ENCODE measurements at regions of chr12 and their contacts with region 1.

Region 1: DNA sequence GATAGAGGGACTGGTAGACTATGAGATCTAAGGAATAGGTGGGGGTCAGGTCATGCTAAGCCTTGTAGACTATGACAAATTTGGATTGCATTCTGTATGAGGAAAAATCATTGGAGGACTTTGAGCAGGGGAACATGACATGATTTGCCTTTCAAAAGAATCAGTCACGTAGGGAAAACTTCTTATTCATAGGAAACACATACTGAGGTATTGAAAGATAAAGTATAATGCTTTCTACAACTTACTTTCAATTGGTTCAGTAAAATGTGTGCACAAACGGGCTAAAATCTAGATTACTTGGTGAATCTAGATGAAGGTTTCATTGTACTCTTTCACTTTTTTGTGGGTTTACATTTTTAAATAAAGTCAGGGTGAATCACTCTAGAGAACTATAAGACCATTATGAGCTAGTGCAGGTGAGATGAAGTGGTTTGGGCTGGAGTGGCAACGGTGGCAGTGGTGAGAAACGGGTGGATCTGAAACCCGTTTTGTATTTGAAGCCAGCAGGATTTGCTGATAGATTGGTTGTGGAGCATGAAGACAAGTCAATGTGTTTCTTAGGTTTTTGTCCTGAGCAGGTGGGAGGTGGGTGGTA is 6.7 kb downstream of the BBS10 start:
- DNase-seq: no peak
- ATAC-seq: peak in 3 of 4 donors; percentile 44 to 62 (median 53)
- H3K4me3 ChIP-seq: no peak overlapping the region
- H3K27ac ChIP-seq: peak overlapping the region; percentile 50
- H3K4me1 ChIP-seq: peaks cover 9% of the 10 kb centered on the region
- H3K27me3 ChIP-seq: no peaks in the 10 kb centered on the region
- CTCF ChIP-seq: no peak

Region 2: GRCh38 chr12:76266797-76267196 is 74.7 kb before region 1 on chr12:
- intact Hi-C with region 1: loop called (anchors 5 kb)
- DNase-seq: peak; percentile 64 to 77
- ATAC-seq: peak; percentile 96 to 99 (median 98)
- H3K4me3 ChIP-seq: no peak overlapping the region
- H3K27ac ChIP-seq: peak overlapping the region; percentile 43
- H3K4me1 ChIP-seq: peaks cover 11% of the 10 kb centered on the region
- H3K27me3 ChIP-seq: no peaks in the 10 kb centered on the region
- CTCF ChIP-seq: no peak